ENCODE measurements at regions of chr5 and their contacts with region 1.

Region 1: DNA sequence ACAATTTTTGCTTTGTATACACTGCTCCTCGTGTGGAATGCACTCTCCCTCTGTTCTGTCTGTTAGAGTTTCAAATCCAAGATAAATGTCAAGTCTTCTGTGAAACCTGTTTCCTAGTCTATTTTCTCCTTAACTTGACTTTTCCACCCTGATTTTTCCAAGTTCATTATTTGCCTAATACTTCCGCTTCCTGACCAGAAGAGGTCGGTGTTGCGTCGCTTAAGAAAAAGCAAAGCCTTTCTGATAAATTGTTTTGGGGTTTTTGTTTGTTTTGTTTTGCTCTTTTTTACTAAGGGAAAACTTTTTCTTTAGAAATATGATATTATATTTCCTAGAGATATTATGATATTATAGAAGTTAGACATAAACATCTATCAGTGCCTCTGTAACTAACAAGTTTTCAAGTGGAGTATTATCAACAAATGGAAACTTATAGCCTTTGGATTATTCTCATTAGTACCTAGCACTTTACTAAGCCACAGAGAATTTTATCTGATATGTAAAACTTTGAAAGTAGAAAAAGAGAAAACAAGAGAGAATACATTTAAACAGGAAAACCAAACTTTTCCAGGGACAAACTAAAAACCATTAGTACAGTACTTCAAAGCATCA is 55.8 kb downstream of the PHAX start:
- DNase-seq: no peak
- H3K4me3 ChIP-seq: no peak overlapping the region
- CTCF ChIP-seq: peak; percentile 66

Region 2: DNA sequence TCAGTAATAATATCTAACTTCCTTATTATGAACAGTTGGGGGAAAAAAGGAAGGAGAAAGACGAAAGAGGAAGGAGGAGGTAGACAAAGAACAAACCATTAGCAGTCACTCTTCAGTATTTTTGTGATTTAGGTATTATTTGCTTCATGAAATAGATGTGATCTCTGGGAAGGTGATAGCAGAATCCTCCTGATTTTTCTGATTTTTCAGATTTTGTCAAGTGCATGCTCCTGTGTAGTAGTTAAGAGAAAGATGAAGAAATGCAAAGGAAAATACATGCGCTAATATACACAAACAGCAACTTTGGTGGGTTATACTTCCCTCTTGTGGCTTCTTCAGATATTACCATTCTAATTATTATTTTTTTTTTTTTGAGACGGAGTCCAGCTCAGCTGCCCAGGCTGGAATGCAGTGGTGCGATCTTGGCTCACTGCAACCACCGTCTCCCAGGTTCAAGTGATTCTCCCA is 152.1 kb after region 1 on chr5:
- CTCF ChIA-PET with region 1: interaction called, 209 read pairs
- POLR2A ChIA-PET with region 1: no interaction called
- DNase-seq: no peak
- H3K4me3 ChIP-seq: no peak overlapping the region
- CTCF ChIP-seq: peak; percentile 49

Measured in AG04449 (cell line).